ENCODE measurements at regions of chr14 and their contacts with region 1.

Region 1: GRCh38 chr14:91138511-91139359 is 24.9 kb downstream of the DGLUCY start:
- DNase-seq: peak; percentile 47
- ATAC-seq: peak; percentile 43
- H3K4me3 Mint-ChIP-seq: no peak overlapping the region
- H3K27ac Mint-ChIP-seq: peak overlapping the region; percentile 54; the same call in 1 of the 2 replicates
- H3K4me1 Mint-ChIP-seq: peaks cover 18% of the 10 kb centered on the region
- H3K27me3 Mint-ChIP-seq: no peaks in the 10 kb centered on the region
- CTCF ChIP-seq: peak; percentile 29

Region 2: DNA sequence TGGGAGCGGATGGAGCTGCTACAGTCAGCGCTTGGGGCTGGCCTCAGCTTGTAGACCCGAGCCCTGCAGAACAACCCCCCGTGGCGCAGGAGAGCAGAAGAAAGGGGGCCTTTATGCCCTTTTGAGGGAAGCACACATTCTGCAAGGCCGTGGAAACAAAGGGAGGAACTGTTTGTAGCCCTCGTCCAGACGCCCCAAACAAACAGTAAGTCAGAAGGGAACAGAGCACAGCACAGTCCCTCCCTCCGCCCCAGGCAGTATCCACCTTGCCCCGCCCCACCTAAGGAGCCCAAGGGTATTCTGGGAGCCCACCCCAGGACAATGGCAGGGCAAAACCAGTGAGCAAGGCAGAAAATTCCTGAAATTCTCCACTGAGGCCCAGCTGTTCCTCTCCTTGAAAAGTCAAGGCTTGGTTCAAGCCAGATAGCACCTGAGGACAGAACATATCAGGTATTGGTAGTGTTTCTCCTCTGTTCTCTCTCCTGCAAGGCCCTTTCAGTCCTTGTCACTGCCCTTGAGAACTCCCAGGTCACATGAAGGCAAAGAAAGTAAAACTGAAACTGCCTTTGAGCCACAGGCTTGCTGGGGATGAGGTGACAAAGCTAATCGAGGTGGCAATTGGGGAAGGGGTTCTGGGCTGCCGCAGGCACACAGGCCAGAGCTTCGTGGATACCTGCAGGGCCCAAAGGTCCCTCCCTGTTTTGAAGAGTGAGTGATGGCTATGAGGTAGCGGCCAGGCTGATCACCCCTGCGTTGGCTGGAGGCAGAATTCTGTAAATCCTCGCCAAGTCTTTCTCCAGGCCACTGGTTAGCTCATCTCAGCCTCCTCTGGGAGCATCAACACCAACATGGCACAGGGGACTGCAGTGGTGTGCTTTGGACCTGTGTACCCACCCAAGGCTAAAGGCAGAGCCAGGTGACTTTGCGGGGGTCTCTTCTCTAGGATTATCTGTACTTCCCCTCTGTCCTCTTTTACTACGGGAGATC is 24.4 kb before region 1 on chr14:
- CTCF ChIA-PET with region 1: interaction called, 17 read pairs
- POLR2A ChIA-PET with region 1: no interaction called
- DNase-seq: peak; percentile 87
- ATAC-seq: peak; percentile 94
- H3K4me3 Mint-ChIP-seq: peak overlapping the region; percentile 73
- H3K27ac Mint-ChIP-seq: peak overlapping the region; percentile 99
- H3K4me1 Mint-ChIP-seq: peaks cover 62% of the 10 kb centered on the region
- H3K27me3 Mint-ChIP-seq: peaks cover 3% of the 10 kb centered on the region; the same call in 1 of the 2 replicates
- CTCF ChIP-seq: no peak